ENCODE measurements at regions of chr20 and their contacts with region 1.

Region 1: DNA sequence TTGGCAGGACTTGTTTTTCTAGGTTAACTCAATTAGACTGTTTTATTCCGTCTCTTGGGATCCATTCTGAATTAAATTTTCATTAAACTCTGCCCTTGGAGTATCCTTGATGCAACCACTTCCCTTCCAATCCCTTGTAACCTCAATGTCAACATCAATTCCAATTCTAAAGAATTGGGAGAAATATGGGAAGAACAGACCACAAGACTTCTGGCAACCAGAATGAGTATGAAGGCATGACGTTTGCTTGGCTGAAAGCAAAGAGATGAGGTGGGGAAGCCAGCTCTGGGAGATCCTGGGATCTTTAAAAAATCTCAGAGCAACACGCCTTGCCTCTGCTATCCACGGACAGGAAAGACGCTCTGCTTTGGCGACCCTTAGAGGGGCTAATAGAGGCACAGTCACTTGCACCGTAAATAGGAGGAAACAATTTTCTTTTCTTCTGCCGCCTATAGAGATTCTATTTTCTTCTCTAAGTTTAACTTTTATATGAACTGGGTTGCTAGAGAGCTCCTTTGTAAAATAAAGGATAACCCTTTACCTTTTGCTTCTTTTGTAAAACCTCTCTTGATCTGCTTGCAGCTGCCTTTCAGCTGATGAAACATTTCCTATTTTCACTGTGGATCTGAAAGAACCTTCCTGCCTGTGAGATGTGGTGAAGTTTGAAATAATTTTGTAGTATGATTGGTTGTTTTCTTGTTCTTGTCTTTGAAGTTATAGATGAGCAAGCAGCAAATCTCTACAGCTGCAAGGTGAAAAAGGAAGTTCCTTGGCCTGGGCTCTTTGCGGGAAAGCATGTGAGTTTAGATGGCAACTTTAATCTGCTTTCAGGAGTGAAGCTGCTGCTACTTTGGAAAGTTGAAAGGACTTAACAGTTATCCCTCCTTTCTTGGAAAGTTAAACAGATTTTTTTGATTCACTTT is at the start of gene ASIP:
- DNase-seq: no peak
- H3K4me3 ChIP-seq: no peak within 1 kb of the TSS
- H3K27ac ChIP-seq: no peak within 1 kb of the TSS
- H3K4me1 ChIP-seq: no peaks in the 10 kb centered on the region
- H3K27me3 ChIP-seq: no peaks in the 10 kb centered on the region
- CTCF ChIP-seq: no peak
- total RNA-seq, gene ASIP: not detected in 2 replicates

Region 2: DNA sequence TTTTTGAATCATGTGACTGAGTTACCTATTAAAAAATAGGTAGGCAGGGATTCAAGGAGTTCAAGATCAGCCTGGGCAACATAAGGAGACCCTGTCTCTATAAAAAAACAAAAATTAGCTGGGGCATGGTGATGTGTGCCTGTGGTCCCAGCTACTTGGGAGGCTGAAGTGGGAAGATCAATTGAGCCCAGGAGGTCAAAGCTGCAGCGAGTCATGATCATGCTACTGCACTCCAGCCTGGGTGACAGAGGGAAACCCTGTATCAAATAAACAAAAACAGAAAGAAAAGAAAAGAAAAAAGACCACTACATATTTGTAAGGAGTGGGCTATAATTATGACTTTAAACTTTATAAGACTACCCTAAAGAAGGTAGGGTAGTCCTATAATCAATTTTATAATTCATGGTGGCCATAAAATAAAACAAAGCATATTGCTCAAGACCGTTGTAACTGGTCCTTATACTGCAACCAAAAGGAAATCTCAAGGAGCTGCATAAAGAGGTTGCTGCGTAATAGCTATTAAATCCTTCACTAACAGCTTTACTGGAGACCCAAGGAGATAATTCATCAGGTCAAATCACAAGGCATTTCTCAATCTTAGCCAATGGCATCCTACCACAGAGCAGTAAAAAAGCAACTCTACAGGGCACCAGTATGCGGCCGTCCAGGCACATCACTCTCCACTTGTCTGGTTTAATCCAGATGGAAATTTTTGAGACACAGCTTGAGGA is 422.4 kb after region 1 on chr20:
- CTCF ChIA-PET with region 1: no interaction called
- POLR2A ChIA-PET with region 1: no interaction called
- intact Hi-C with region 1: no loop called
- DNase-seq: no peak
- H3K4me3 ChIP-seq: no peak overlapping the region
- H3K27ac ChIP-seq: no peak overlapping the region
- H3K4me1 ChIP-seq: 0 out of 2 replicates have a peak, but pooled peaks cover 5% of the 10 kb centered on the region
- H3K27me3 ChIP-seq: no peaks in the 10 kb centered on the region
- CTCF ChIP-seq: no peak

Region 3: GRCh38 chr20:35344354-35344837 is 1103.4 kb after region 1 on chr20:
- CTCF ChIA-PET with region 1: no interaction called
- POLR2A ChIA-PET with region 1: interaction called, 10 read pairs
- intact Hi-C with region 1: no loop called
- DNase-seq: peak; percentile 64 to 83
- H3K4me3 ChIP-seq: no peak overlapping the region
- H3K27ac ChIP-seq: peak overlapping the region; percentile 2
- H3K4me1 ChIP-seq: peaks cover 19% of the 10 kb centered on the region
- H3K27me3 ChIP-seq: no peaks in the 10 kb centered on the region
- CTCF ChIP-seq: no peak